HCT116 (cell line): ENCODE measurements at regions of chr15 and their contacts with region 1.

Region 1: GRCh38 chr15:59372352-59373211 is at the start of gene MYO1E:
- DNase-seq: peak; percentile 94
- ATAC-seq: peak; percentile 89
- H3K4me3 ChIP-seq: peak within 1 kb of the TSS; percentile 80 to 83
- H3K27ac ChIP-seq: peak within 1 kb of the TSS; percentile 75
- H3K4me1 ChIP-seq: peaks cover 3 to 35% of the 10 kb centered on the region in 2 experiments; a peak in 3 of 4 replicates
- H3K27me3 ChIP-seq: no peaks in the 10 kb centered on the region
- CTCF ChIP-seq: no peak
- POLR2A ChIP-seq: peak; percentile 88
- RAD21 ChIP-seq: no peak
- total RNA-seq, gene MYO1E: 182 TPM

Region 2: DNA sequence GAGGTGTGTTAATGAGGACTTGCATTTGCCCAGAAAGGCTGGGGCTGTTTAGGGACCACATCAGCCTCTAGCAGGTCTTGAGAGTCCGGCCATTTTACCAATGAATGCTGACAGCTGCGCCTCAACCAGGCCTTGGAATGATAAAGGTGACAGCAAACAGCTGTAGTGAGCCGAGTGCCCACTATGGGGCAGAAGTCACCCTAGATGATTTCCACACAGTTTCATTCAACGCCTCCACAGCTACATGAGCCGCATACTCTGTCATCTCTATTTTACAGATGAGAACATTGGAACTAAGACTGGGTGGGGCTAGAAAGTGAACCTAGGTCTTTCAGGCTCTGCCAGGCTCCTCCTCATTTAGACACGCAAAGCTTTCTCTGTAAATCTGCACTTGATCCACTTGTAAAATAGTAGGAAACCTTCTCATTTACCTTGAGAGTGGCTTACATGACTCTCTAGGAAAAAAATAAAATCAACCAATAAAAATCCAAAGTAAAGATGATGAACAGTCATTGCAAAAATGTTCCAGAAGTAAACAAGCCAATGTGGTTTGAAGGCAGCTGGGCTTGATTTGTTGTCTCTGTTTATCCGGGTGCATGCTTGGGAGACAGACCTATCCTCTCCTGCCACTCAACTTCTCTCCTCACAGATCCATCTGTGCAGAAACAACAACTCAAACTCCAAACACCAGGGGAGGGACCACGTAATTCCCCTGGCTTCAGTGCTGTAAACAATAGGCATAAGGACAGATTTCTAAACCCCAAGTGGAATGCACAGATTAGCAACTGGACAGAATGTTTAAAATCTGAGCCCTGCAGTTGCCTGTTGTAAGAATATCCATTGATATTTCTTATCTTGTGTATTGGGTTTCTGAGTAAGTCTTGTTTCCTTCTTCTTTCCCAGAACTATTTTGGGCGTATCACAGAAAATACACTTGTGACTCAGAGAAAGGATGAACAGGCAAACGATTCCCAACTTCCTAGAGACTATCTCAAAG is 197.4 kb before region 1 on chr15:
- CTCF ChIA-PET with region 1: interaction called, 3 read pairs
- POLR2A ChIA-PET with region 1: interaction called, 3 read pairs
- RAD21 ChIA-PET with region 1: no interaction called
- intact Hi-C with region 1: loop called (anchors 10 kb)
- DNase-seq: peak; percentile 74
- ATAC-seq: peak; percentile 96
- H3K4me3 ChIP-seq: no peak overlapping the region
- H3K27ac ChIP-seq: no peak overlapping the region; the same call in 1 of the 2 replicates
- H3K4me1 ChIP-seq: peaks cover 9 to 24% of the 10 kb centered on the region in 2 experiments
- H3K27me3 ChIP-seq: no peaks in the 10 kb centered on the region
- CTCF ChIP-seq: peak; percentile 70 to 74 (median 72)
- POLR2A ChIP-seq: no peak
- RAD21 ChIP-seq: peak; percentile 84

Region 3: GRCh38 chr15:59255647-59256380 is 116.8 kb before region 1 on chr15:
- CTCF ChIA-PET with region 1: no interaction called
- POLR2A ChIA-PET with region 1: no interaction called
- RAD21 ChIA-PET with region 1: no interaction called
- intact Hi-C with region 1: loop called (anchors 5 kb)
- DNase-seq: peak; percentile 83
- ATAC-seq: peak; percentile 88
- H3K4me3 ChIP-seq: peak overlapping the region in 1 of 2 experiments; percentile 11; a peak in 1 of 4 replicates
- H3K27ac ChIP-seq: peak overlapping the region; percentile 2; the same call in 1 of the 2 replicates
- H3K4me1 ChIP-seq: peaks cover 21 to 24% of the 10 kb centered on the region in 2 experiments
- H3K27me3 ChIP-seq: no peaks in the 10 kb centered on the region
- CTCF ChIP-seq: no peak
- POLR2A ChIP-seq: no peak
- RAD21 ChIP-seq: no peak

Region 4: DNA sequence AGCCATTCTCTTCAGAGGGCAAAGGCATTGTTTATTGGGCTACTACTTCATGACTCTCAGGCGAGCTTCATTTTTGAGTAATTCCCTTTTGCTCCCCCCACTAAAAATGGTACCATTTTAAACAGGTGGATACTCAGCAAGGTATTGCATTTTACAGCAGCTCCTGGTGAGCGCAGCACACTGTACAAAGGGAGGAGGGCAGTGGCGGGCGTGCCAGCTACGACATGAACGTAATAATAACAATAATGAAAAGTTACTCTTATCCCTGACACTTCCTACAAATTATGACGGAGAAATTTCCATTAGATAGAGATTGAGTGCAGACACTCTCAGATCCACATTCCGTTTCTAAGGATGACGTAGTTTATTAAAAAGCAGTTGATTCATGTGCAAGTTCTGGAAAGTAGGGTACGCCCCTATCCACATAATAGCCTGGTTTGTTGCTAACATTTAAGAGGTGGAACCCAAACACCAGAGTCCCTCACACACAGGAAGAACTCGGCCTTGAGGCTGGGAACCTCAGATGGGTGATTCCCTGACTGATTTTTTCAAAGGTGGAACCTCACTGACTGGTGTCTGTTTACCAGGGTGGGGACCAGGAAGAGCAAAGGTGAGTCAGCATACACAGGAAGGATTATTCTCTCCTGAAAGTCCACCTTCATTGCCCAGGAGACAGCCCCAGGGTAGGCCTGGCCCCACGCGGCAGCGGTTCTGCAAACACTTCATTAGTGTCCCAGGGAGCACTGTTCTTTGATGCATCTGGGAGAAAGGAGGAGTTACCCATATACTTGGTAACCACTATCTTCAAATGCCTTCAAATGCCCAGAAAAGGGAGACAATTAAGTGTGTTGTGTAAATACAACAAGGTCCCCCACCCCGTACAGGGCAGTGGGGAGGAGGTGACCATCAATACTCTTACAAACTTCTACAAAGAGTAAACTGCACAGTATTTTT is 96.1 kb before region 1 on chr15:
- CTCF ChIA-PET with region 1: no interaction called
- POLR2A ChIA-PET with region 1: interaction called, 3 read pairs
- RAD21 ChIA-PET with region 1: no interaction called
- intact Hi-C with region 1: loop called (anchors 5 kb)
- DNase-seq: peak; percentile 90
- ATAC-seq: peak; percentile 86
- H3K4me3 ChIP-seq: peak overlapping the region; percentile 10 to 25
- H3K27ac ChIP-seq: peak overlapping the region; percentile 84
- H3K4me1 ChIP-seq: peaks cover 64 to 100% of the 10 kb centered on the region in 2 experiments
- H3K27me3 ChIP-seq: no peaks in the 10 kb centered on the region
- CTCF ChIP-seq: no peak
- POLR2A ChIP-seq: no peak
- RAD21 ChIP-seq: peak; percentile 44

Region 5: DNA sequence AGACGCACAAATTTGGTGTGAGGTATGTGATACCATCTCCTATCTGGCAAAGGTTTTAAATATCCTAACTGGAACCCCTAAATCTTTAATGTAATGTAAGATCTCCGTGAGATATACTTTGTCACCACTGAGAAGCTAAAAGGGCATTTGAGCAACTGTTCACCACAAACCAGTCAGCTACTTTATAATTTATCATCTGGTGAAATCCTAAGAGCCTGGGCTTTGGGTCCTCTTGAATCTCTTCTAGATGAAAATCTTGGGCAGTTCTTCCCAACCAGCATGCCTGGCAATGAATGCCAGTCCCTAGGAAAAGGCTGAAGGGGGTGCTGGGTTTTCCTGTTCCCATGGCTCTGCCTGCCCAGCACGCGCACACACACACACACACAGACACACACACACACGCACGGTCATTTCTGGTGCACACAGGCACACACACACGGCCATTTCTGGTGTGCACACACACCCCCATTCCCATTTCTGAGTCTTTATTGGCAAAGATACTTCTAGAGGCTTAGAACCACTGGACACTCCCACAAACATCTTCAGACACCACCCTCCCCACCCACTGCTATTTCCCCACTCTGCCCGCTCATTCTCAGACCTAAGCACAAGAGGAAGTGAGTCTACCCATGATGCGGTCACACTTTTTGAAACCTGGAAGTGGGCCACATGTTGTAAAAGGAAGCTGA is 72.5 kb before region 1 on chr15:
- CTCF ChIA-PET with region 1: no interaction called
- POLR2A ChIA-PET with region 1: interaction called, 5 read pairs
- RAD21 ChIA-PET with region 1: interaction called in 1 of 2 experiments, 3 read pairs
- intact Hi-C with region 1: loop called (anchors 1 kb)
- DNase-seq: peak; percentile 86
- ATAC-seq: peak; percentile 62
- H3K4me3 ChIP-seq: peak overlapping the region; percentile 8 to 44; a peak in 3 of 4 replicates
- H3K27ac ChIP-seq: peak overlapping the region; percentile 62
- H3K4me1 ChIP-seq: peaks cover 78 to 99% of the 10 kb centered on the region in 2 experiments
- H3K27me3 ChIP-seq: no peaks in the 10 kb centered on the region
- CTCF ChIP-seq: no peak
- POLR2A ChIP-seq: no peak
- RAD21 ChIP-seq: peak; percentile 26; the same call in 1 of the 2 replicates